ENCODE measurements at regions of chr3 and their contacts with region 1.

Region 1: GRCh38 chr3:39383045-39383880 is at the start of gene SLC25A38:
- DNase-seq: peak; percentile 82
- ATAC-seq: peak; percentile 86
- H3K4me3 ChIP-seq: peak within 1 kb of the TSS; percentile 84 to 89 (median 86)
- H3K27ac ChIP-seq: peak within 1 kb of the TSS; percentile 89
- H3K4me1 ChIP-seq: peaks cover 56% of the 10 kb centered on the region
- H3K27me3 ChIP-seq: no peaks in the 10 kb centered on the region
- CTCF ChIP-seq: peak; percentile 59
- EP300 ChIP-seq: no peak
- POLR2A ChIP-seq: peak; percentile 64 to 69
- RAD21 ChIP-seq: no peak; the same call in 1 of the 2 replicates
- total RNA-seq, gene SLC25A38: 32.5 and 33.7 TPM in 2 replicates

Region 2: GRCh38 chr3:39406368-39407258 is 23.4 kb after region 1 on chr3 and contains the start of gene RPSA:
- CTCF ChIA-PET with region 1: no interaction called
- POLR2A ChIA-PET with region 1: interaction called, 19 read pairs
- in situ Hi-C with region 1: no loop called
- intact Hi-C with region 1: loop called (anchors 2 kb)
- DNase-seq: peak; percentile 96
- ATAC-seq: peak; percentile 94
- H3K4me3 ChIP-seq: peak within 1 kb of the TSS; percentile 82 to 94 (median 93)
- H3K27ac ChIP-seq: peak within 1 kb of the TSS; percentile 91
- H3K4me1 ChIP-seq: peaks cover 76% of the 10 kb centered on the region
- H3K27me3 ChIP-seq: no peaks in the 10 kb centered on the region; a peak in 1 of 5 replicates
- CTCF ChIP-seq: peak; percentile 70
- EP300 ChIP-seq: no peak
- POLR2A ChIP-seq: peak; percentile 98 to 99
- RAD21 ChIP-seq: peak; percentile 22
- total RNA-seq, gene RPSA: 1,683 and 1,960 TPM in 2 replicates

Measured in HepG2 (cell line).